ENCODE measurements at regions of chr3 and their contacts with region 1.

Region 1: DNA sequence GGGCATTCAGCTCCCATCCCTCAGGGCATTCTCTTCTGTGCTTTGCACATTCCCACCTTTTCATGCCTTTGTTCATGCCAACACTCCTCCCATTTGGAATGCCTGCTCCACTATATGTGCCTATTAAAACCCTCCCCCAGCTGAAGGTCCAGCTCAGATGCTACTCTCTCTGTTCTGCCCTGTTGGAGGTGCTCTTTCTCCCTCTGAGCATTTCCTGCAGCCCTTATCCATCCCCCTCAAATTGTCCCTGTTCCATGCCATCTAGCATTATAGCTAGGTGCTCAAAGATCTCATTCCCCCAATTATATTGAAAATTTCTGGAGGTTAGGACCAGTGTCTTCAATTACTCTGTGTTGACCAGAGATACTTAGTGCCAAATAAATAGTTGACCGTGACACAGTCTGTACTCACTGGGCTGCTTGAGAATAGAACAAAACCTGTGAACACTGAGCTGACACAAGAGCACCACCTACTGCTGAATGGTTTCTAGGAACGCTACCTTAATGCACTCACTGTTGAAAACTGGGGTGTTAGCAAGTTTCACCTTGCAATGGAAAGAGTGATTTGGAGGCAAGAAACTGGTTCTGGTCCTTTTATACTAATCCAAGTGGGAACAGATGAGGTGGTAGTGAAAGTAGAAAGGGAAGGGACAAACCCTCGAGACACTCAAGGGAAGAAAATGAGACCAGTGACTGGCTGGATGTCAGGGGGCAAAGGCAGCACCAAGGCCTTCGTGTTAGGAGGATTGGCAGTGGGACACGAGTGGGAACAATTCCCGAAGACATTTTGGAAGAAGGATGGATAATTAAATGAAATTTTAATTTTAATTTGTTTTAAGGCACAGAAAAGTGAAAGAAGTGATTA is 289.8 kb upstream of the ROPN1 start:
- DNase-seq: no peak
- H3K4me3 ChIP-seq: no peak overlapping the region
- CTCF ChIP-seq: no peak
- POLR2A ChIP-seq: no peak

Region 2: GRCh38 chr3:124014366-124014942 is 267.2 kb before region 1 on chr3:
- intact Hi-C with region 1: loop called (anchors 10 kb)
- DNase-seq: no peak
- H3K4me3 ChIP-seq: no peak overlapping the region
- CTCF ChIP-seq: no peak
- POLR2A ChIP-seq: no peak

Measured in lower leg skin (tissue), 4 donors.